ENCODE measurements at regions of chr12 and their contacts with region 1.

Region 1: GRCh38 chr12:21940549-21941505 is at the start of gene ABCC9:
- DNase-seq: peak; percentile 84
- total RNA-seq, gene ABCC9: 66.2 TPM

Region 2: DNA sequence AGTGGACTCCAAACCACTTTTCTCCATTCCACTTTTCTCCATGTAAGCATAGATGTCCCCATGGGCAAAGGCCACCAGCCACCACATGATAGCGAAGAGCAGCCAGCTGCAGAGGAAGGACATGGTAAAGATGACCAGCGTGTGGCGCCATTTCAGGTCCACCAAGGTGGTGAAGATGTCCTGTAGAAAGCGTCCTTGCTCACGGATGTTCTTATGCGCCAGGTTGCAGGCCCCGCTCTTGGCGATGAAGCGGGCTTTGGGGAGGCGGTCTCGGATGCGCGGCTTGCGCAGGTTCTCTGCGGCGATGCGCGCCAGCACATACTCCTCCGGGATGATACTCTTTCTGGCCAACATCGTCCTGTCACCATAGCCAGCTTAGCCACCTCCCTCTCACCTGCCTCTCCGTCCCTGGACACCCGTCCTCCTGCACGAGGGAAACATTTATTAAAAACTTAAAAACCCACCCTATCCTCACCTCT is 167.5 kb before region 1 on chr12:
- intact Hi-C with region 1: loop called (anchors 2 kb)
- DNase-seq: peak; percentile 82

Region 3: DNA sequence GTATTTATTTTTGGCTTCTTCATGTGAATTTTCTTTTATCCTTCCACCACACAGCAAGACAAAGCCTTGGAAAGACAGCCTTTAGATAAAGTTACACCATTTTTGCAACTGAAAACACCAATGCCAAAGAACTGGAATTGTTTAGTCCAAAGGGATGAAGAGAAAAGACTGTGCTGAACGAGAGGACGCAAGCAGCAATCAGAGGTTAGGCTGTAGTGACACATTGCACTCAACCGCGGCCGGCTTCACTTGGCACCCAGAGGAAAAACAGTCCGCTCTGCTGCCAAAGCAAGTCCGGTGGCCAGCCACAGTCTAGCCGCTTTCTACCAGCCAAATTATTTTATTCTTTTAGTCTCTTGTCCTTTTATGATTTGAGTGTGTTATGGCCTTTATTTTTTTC is 117.2 kb before region 1 on chr12:
- intact Hi-C with region 1: loop called (anchors 5 kb)
- DNase-seq: peak; percentile 75

Region 4: DNA sequence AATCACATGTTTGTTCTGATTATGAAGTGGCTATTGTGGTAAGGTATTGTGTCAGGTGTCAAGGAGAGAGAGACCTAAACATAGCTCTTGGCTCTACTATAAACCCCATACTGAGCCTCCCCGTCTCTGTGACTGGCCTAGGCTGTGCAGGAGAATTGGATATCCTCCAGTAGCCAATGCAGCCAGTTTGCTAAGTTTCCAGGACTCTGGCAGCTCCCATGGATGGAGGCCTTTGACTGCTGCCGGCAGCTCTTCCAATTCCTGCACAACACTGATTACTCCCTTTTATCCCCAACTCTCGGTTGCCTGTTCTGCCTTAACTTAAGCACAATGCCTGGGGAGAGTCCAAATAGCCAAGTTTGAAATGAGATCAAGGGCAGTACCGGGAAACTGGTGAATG is 58.9 kb before region 1 on chr12:
- intact Hi-C with region 1: loop called (anchors 1 kb)
- DNase-seq: peak; percentile 75

Region 5: DNA sequence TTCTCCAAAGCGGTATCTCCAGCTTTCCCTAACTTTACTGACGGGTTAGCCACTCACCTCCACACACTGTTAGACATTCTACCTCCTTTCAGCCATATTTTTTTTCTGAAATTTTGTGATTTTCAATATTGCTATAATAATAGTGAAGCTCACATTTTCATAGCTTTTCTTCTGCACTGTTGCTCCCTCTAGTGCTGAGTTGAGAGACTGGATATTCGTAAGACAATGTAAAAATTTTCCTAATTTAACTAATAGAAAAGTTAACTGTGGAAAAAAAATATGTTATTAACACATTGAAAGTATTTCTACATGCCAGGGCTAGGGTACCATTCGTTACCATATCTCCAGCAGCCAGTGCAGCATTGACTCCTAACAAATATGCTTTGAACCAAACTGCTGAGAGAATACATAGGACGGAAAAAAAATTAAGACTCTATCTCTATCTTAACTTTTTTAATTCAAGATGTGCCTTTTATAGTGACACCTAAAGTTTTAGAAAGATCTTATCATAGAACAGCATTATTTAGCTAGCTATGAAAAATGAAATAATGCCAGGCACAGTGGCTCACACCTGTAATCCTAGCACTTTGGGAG is 49.1 kb after region 1 on chr12:
- intact Hi-C with region 1: loop called (anchors 5 kb)
- DNase-seq: no peak